ENCODE measurements at regions of chr11 and their contacts with region 1.

Region 1: GRCh38 chr11:73288873-73289707 is 17.0 kb downstream of the P2RY6 start:
- DNase-seq: peak; percentile 70 to 79
- H3K4me3 ChIP-seq: peak overlapping the region in 1 of 3 donors; percentile 21
- H3K27ac ChIP-seq: peak overlapping the region; percentile 30 to 60 (median 39)
- H3K4me1 ChIP-seq: peaks cover 0 to 26% of the 10 kb centered on the region in 2 donors
- H3K27me3 ChIP-seq: no peaks in the 10 kb centered on the region
- CTCF ChIP-seq: peak; percentile 81 to 99 (median 96)
- POLR2A ChIP-seq: no peak

Region 2: GRCh38 chr11:73184953-73185671 is 104.0 kb before region 1 on chr11:
- intact Hi-C with region 1: loop called (anchors 2 kb)
- DNase-seq: peak; percentile 77 to 81
- H3K4me3 ChIP-seq: no peak overlapping the region
- H3K27ac ChIP-seq: peak overlapping the region in 2 of 3 donors; percentile 19 to 27
- H3K4me1 ChIP-seq: peaks cover 12 to 18% of the 10 kb centered on the region in 2 donors
- H3K27me3 ChIP-seq: no peaks in the 10 kb centered on the region
- CTCF ChIP-seq: peak; percentile 78 to 97 (median 92)
- POLR2A ChIP-seq: no peak

Region 3: GRCh38 chr11:73242251-73243079 is 46.6 kb before region 1 on chr11:
- intact Hi-C with region 1: loop called (anchors 5 kb)
- DNase-seq: peak; percentile 74 to 79
- H3K4me3 ChIP-seq: no peak overlapping the region
- H3K27ac ChIP-seq: peak overlapping the region in 1 of 3 donors; percentile 8
- H3K4me1 ChIP-seq: peaks cover 10 to 23% of the 10 kb centered on the region in 2 donors
- H3K27me3 ChIP-seq: no peaks in the 10 kb centered on the region
- CTCF ChIP-seq: peak; percentile 77 to 95 (median 82)
- POLR2A ChIP-seq: no peak

Measured in thyroid gland (tissue), 4 donors.